Left ventricle myocardium inferior (tissue), 1 donor: ENCODE measurements at regions of chr2 and their contacts with region 1.

Region 1: GRCh38 chr2:47232738-47233415 is 77.8 kb upstream of the STPG4 start:
- DNase-seq: no peak
- H3K4me3 ChIP-seq: no peak overlapping the region
- H3K27ac ChIP-seq: no peak overlapping the region
- H3K4me1 ChIP-seq: peaks cover 26% of the 10 kb centered on the region
- H3K27me3 ChIP-seq: no peaks in the 10 kb centered on the region
- CTCF ChIP-seq: no peak

Region 2: DNA sequence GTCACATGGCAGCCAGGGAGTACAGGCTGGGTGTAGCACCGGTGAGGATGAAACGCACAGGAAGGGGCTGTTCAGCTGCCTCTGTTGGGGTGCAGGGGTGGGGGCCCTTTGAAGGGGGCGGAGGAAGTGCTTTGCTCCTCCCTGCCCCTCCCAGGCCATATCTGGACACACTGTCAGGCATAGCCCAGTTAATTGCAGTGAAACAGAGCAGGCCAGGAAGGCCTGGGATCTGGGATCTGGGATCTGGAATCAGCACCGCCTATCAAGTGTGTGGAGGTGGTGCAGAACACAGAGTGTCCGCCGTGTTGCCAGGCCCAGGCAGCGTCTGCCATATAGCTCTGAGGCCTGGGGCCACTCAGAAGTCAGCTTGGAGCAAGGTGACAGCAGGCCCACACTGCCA is 50.8 kb after region 1 on chr2:
- intact Hi-C with region 1: loop called (anchors 1 kb)
- DNase-seq: no peak
- H3K4me3 ChIP-seq: no peak overlapping the region
- H3K27ac ChIP-seq: no peak overlapping the region
- H3K4me1 ChIP-seq: no peaks in the 10 kb centered on the region
- H3K27me3 ChIP-seq: no peaks in the 10 kb centered on the region
- CTCF ChIP-seq: no peak